ENCODE measurements at regions of chr12 and their contacts with region 1.

Region 1: GRCh38 chr12:4538207-4539160 is at the start of gene RAD51AP1:
- DNase-seq: peak; percentile 94 to 97 (median 96)
- ATAC-seq: peak; percentile 100
- H3K4me3 ChIP-seq: peak within 1 kb of the TSS; percentile 54 to 92 (median 78)
- H3K27ac ChIP-seq: peak within 1 kb of the TSS; percentile 88 to 99 (median 94)
- H3K4me1 ChIP-seq: peaks cover 0 to 28% (median 14%) of the 10 kb centered on the region in 12 donors
- H3K27me3 ChIP-seq: no peaks in the 10 kb centered on the region
- CTCF ChIP-seq: no peak
- POLR2A ChIP-seq: no peak
- total RNA-seq, gene RAD51AP1: 0.55 to 8.2 (median 1.6) TPM in 8 of 9 donors, not detected in the other

Region 2: DNA sequence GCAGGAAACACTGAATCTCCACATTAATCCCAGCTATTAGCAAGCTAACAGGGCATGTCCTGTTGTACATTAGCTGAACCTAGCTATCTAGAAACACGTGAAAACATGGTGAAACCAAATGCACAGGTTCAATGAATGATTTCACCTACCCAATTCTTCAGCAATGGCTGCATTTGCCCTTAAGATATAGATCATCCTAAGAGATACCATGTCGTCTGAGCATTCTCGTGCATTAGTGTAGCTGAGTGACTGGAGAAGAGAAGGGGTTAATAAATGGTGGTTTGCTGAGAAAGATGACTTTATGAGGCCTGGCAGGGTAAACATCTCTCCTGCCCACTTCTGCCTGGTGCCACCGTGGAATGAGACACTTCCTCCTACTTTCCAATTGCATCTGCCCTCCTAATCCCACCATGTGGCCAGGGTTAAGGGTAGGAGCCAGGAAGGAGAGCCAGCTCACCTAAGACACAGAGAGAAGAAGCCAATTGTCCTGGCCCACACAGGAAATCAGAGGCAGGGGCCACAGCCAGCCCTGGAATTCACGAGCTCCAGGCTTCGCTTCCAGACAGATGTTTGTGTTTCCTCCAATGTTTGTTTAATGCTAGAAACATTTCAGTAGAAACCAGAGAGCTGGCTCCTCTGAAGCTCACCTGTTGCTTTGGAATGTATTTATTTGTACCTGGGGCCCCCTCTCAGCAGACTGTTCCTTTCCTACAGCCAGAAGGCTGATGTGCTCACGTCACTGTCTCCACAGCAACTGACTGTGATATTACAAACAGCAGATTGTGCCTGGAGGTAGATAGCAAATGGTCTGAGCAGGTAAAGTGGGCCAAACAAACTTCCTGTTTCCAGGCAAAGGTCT is 539.3 kb before region 1 on chr12:
- intact Hi-C with region 1: loop called in 1 of 10 experiments (anchors 10 kb)
- DNase-seq: no peak
- ATAC-seq: no peak
- H3K4me3 ChIP-seq: no peak overlapping the region
- H3K27ac ChIP-seq: no peak overlapping the region
- H3K4me1 ChIP-seq: no peaks in the 10 kb centered on the region
- H3K27me3 ChIP-seq: peaks cover 0 to 13% (median 0%) of the 10 kb centered on the region in 9 donors
- CTCF ChIP-seq: no peak
- POLR2A ChIP-seq: no peak

Region 3: DNA sequence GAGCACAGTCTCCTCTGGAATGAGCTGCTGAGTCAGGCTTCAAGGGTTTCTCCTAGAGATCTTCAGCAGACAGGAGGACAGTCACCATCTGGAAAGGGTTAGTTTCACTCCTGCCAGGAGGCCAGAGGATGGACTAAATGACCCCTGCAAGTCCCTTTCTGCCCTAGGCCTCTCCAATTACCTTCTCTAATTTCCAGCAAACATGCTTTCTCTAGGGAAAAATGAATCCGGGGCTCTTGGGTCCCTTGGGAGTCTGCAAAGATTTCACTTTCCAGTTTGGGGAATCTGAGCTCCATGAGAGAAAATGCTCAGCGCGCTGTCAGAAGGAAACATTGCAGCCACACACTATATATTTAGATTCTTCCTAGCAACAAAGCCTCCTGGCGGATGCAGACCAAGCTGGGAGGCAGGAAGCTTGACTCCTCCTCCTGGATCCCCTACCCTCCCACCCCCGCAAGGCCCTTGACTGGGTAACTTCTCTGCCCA is 449.3 kb before region 1 on chr12:
- intact Hi-C with region 1: no loop called
- DNase-seq: peak in 1 of 5 donors; percentile 14
- ATAC-seq: peak in 1 of 4 donors; percentile 24
- H3K4me3 ChIP-seq: no peak overlapping the region
- H3K27ac ChIP-seq: peak overlapping the region in 2 of 12 donors; percentile 24 to 42
- H3K4me1 ChIP-seq: peaks cover 0 to 5% (median 0%) of the 10 kb centered on the region in 12 donors
- H3K27me3 ChIP-seq: peaks cover 0 to 8% (median 0%) of the 10 kb centered on the region in 9 donors
- CTCF ChIP-seq: no peak
- POLR2A ChIP-seq: no peak

Region 4: GRCh38 chr12:4356041-4356327 is 182.5 kb before region 1 on chr12:
- intact Hi-C with region 1: loop called in 1 of 10 experiments (anchors 10 kb)
- DNase-seq: peak in 3 of 5 donors; percentile 17 to 40 (median 25)
- ATAC-seq: peak in 2 of 4 donors; percentile 12 to 50
- H3K4me3 ChIP-seq: no peak overlapping the region
- H3K27ac ChIP-seq: peak overlapping the region in 5 of 12 donors; percentile 11 to 64 (median 50)
- H3K4me1 ChIP-seq: peaks cover 0 to 10% (median 0%) of the 10 kb centered on the region in 12 donors
- H3K27me3 ChIP-seq: peaks cover 0 to 2% (median 0%) of the 10 kb centered on the region in 9 donors
- CTCF ChIP-seq: peak; percentile 17 to 51 (median 32)
- POLR2A ChIP-seq: no peak

Region 5: GRCh38 chr12:4604684-4605193 is 66.3 kb after region 1 on chr12:
- intact Hi-C with region 1: loop called in 1 of 10 experiments (anchors 2 kb)
- DNase-seq: peak; percentile 76 to 81 (median 79)
- ATAC-seq: peak; percentile 86 to 98 (median 98)
- H3K4me3 ChIP-seq: peak overlapping the region; percentile 52 to 86 (median 70)
- H3K27ac ChIP-seq: peak overlapping the region in 10 of 12 donors; percentile 35 to 79 (median 72)
- H3K4me1 ChIP-seq: peaks cover 0 to 27% (median 10%) of the 10 kb centered on the region in 12 donors
- H3K27me3 ChIP-seq: no peaks in the 10 kb centered on the region
- CTCF ChIP-seq: peak; percentile 92 to 99 (median 96)
- POLR2A ChIP-seq: peak in 1 of 2 donors; percentile 20

Region 6: DNA sequence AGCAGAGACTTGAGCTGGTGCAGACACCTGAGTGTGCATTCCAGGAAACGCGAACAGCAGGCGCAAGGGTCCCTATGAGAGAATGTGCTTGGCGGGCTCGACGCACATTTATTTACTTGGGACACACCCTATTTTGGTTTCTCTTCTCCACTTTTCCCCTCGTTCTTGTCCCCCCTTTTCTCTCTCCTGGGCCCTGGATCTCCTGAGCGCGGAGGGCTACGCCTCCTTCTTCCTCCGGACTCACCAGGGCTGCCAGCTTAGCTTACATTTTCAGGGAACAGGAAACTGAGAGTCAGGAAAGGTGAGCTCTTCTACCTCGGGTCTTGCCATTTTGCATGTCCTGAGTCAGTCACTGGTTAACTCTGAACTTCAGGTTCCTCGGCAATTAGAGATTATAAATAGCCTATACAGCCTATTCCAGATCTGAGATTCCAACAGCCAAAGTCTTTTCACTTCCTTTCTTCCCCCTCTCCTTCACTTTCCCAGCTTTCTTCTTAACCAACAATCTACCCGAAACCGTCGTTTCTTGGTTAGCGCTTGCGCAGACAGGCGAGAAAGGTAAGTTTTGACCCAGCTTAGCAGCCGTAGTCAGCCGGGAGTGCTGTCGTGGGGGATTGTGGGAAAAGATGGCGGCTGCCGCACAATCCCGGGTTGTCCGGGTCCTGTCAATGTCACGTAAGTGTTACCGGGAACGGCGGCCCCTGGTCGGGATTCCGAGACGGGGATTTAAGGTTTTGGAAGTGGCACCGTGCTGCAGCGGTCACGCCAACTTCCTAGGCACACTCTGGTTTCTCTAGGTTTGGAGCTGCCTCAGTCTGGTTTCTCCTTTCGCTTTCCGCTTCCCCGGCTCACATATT is 110.2 kb after region 1 on chr12 and contains the starts of genes AKAP3 and NDUFA9:
- intact Hi-C with region 1: loop called in 1 of 10 experiments (anchors 2 kb)
- DNase-seq: peak; percentile 83 to 88 (median 86)
- ATAC-seq: peak; percentile 95 to 99 (median 98)
- H3K4me3 ChIP-seq: peak within 1 kb of the TSS; percentile 47 to 96 (median 76)
- H3K27ac ChIP-seq: peak within 1 kb of the TSS; percentile 81 to 90 (median 86)
- H3K4me1 ChIP-seq: peaks cover 8 to 46% (median 36%) of the 10 kb centered on the region in 12 donors
- H3K27me3 ChIP-seq: no peaks in the 10 kb centered on the region
- CTCF ChIP-seq: no peak
- POLR2A ChIP-seq: peak in 1 of 2 donors; percentile 42
- total RNA-seq, gene AKAP3: 2.3 to 4.0 (median 3.2) TPM
- total RNA-seq, gene NDUFA9: 59.2 to 333 (median 270) TPM

Region 7: DNA sequence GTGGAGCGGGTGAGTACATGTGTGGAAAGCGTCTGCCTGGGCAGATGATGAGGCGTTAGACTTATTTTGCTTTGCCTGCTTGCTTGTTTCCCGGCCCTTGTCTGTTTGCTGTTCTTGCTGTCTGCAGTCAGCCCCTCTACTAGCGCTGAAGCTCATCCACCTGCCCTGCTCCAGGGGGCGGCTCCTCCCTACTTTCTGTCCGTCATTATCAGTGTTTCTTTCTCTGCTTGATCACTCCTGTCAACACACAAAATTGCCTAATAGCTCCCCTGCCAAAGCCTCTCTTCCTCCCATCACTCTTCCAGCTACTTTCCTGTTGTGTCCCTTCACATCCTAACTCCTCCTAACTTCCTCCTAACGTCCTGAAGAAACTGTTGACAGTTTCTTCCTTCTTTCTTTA is 146.8 kb after region 1 on chr12:
- intact Hi-C with region 1: no loop called
- DNase-seq: no peak
- ATAC-seq: peak in 2 of 4 donors; percentile 42 to 50
- H3K4me3 ChIP-seq: no peak overlapping the region
- H3K27ac ChIP-seq: no peak overlapping the region
- H3K4me1 ChIP-seq: no peaks in the 10 kb centered on the region
- H3K27me3 ChIP-seq: no peaks in the 10 kb centered on the region
- CTCF ChIP-seq: no peak
- POLR2A ChIP-seq: no peak

Region 8: GRCh38 chr12:5907807-5908206 is 1369.3 kb after region 1 on chr12:
- intact Hi-C with region 1: no loop called
- DNase-seq: no peak
- ATAC-seq: no peak
- H3K4me3 ChIP-seq: no peak overlapping the region
- H3K27ac ChIP-seq: no peak overlapping the region
- H3K4me1 ChIP-seq: no peaks in the 10 kb centered on the region
- H3K27me3 ChIP-seq: peaks cover 0 to 7% (median 0%) of the 10 kb centered on the region in 9 donors
- CTCF ChIP-seq: no peak
- POLR2A ChIP-seq: no peak

Measured in heart left ventricle (tissue), 16 donors.